Thyroid gland (tissue), 4 donors: ENCODE measurements at regions of chr4 and their contacts with region 1.

Region 1: GRCh38 chr4:24912252-24913118 is at the start of gene CCDC149:
- DNase-seq: peak; percentile 94 to 95
- H3K4me3 ChIP-seq: peak within 1 kb of the TSS; percentile 24 to 51 (median 50)
- H3K27ac ChIP-seq: peak within 1 kb of the TSS; percentile 86 to 90 (median 90)
- H3K4me1 ChIP-seq: peaks cover 13 to 15% of the 10 kb centered on the region in 2 donors
- H3K27me3 ChIP-seq: no peaks in the 10 kb centered on the region
- CTCF ChIP-seq: peak in 1 of 6 experiments; percentile 21
- POLR2A ChIP-seq: peak; percentile 50 to 96
- total RNA-seq, gene CCDC149: 19.3 to 29.2 (median 21.8) TPM

Region 2: GRCh38 chr4:24794916-24795665 is 117.4 kb before region 1 on chr4 and contains the start of gene SOD3:
- intact Hi-C with region 1: loop called (anchors 10 kb)
- DNase-seq: peak; percentile 90 to 93
- H3K4me3 ChIP-seq: peak within 1 kb of the TSS in 1 of 3 donors; percentile 14
- H3K27ac ChIP-seq: peak within 1 kb of the TSS; percentile 70 to 91 (median 90)
- H3K4me1 ChIP-seq: peaks cover 10 to 32% of the 10 kb centered on the region in 2 donors
- H3K27me3 ChIP-seq: no peaks in the 10 kb centered on the region
- CTCF ChIP-seq: no peak
- POLR2A ChIP-seq: peak; percentile 43 to 95
- total RNA-seq, gene SOD3: 140 to 215 (median 162) TPM

Region 3: GRCh38 chr4:25123236-25123635 is 210.8 kb after region 1 on chr4:
- intact Hi-C with region 1: no loop called
- DNase-seq: no peak
- H3K4me3 ChIP-seq: no peak overlapping the region
- H3K27ac ChIP-seq: no peak overlapping the region
- H3K4me1 ChIP-seq: no peaks in the 10 kb centered on the region
- H3K27me3 ChIP-seq: no peaks in the 10 kb centered on the region
- CTCF ChIP-seq: no peak
- POLR2A ChIP-seq: no peak